Upper lobe of right lung (tissue), 1 donor: ENCODE measurements at regions of chr7 and their contacts with region 1.

Region 1: GRCh38 chr7:92682903-92683539 is 92.8 kb upstream of the FAM133B start:
- DNase-seq: no peak
- ATAC-seq: no peak
- H3K4me3 ChIP-seq: no peak overlapping the region
- H3K27ac ChIP-seq: peak overlapping the region; percentile 3
- H3K4me1 ChIP-seq: peaks cover 15% of the 10 kb centered on the region
- H3K27me3 ChIP-seq: no peaks in the 10 kb centered on the region
- CTCF ChIP-seq: no peak

Region 2: GRCh38 chr7:92633211-92633906 is 49.7 kb before region 1 on chr7:
- intact Hi-C with region 1: loop called (anchors 10 kb)
- DNase-seq: no peak
- ATAC-seq: peak; percentile 89
- H3K4me3 ChIP-seq: no peak overlapping the region
- H3K27ac ChIP-seq: peak overlapping the region; percentile 64
- H3K4me1 ChIP-seq: peaks cover 25% of the 10 kb centered on the region
- H3K27me3 ChIP-seq: no peaks in the 10 kb centered on the region
- CTCF ChIP-seq: no peak